Activated CD4-positive, alpha-beta memory T cell treated with anti-CD3 and anti-CD28 coated beads for 36 hours (primary cell): ENCODE measurements at regions of chr2 and their contacts with region 1.

Region 1: GRCh38 chr2:854460-854859 is 96.2 kb upstream of the SNTG2 start:
- DNase-seq: peak; percentile 72
- H3K4me3 Mint-ChIP-seq: no peak overlapping the region
- H3K27ac Mint-ChIP-seq: peak overlapping the region; percentile 43
- H3K4me1 Mint-ChIP-seq: peaks cover 22% of the 10 kb centered on the region
- H3K27me3 Mint-ChIP-seq: no peaks in the 10 kb centered on the region

Region 2: DNA sequence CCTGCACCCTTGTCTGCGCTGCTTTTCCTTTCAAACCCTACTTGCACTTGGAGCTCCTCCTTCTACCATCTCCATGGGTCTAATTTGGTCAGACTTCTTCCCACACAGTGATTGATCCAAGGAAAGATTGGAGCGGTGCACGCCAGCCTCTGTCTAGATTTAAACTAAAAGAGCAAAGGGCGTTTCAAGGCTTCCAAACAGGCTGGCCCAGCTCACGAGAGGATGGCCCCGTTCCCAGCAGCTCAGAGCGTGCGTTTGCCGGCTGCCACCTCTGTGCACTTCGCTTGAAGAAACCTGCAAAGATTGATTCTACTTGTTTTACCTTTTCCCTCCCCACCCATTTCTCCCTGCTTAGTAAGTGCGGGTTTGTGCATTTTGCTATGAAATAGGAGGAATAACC is 487.8 kb before region 1 on chr2:
- CTCF ChIA-PET with region 1: no interaction called
- POLR2A ChIA-PET with region 1: no interaction called
- intact Hi-C with region 1: no loop called
- DNase-seq: no peak
- H3K4me3 Mint-ChIP-seq: no peak overlapping the region
- H3K27ac Mint-ChIP-seq: no peak overlapping the region
- H3K4me1 Mint-ChIP-seq: no peaks in the 10 kb centered on the region
- H3K27me3 Mint-ChIP-seq: peaks cover 17% of the 10 kb centered on the region

Region 3: DNA sequence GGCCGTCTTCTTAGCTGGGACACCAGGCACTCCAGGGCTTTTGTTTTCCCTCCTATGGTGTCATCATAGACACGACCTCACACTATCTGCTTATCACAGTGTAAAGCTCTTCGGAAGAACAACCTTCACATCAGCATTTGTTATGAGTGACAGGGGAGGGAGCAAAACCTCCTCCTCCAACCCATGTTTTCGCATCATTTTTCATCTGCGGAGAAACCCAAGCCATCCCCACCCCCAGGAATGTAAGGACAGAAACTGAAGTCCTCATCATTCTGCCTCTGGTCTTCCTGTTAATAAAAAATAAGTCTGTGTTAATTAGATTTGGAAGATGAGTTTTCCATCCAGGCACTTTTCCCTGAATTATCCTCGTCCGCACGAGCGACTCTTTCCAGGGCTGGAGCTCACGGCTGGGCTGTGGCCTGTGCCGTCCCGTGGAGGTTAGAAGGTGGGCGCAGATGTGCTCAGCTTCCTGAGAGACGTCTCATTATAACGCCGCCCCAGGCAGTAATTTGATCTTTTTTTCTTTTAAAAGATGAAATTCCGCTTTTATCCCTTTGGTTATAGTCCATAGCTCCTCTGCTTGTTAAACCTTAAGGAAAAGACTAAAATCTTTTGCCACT is 75.6 kb before region 1 on chr2:
- CTCF ChIA-PET with region 1: no interaction called
- POLR2A ChIA-PET with region 1: no interaction called
- intact Hi-C with region 1: no loop called
- DNase-seq: no peak
- H3K4me3 Mint-ChIP-seq: no peak overlapping the region
- H3K27ac Mint-ChIP-seq: no peak overlapping the region
- H3K4me1 Mint-ChIP-seq: no peaks in the 10 kb centered on the region
- H3K27me3 Mint-ChIP-seq: peaks cover 13% of the 10 kb centered on the region

Region 4: GRCh38 chr2:866009-866680 is 11.7 kb after region 1 on chr2:
- CTCF ChIA-PET with region 1: no interaction called
- POLR2A ChIA-PET with region 1: no interaction called
- intact Hi-C with region 1: no loop called
- DNase-seq: no peak
- H3K4me3 Mint-ChIP-seq: no peak overlapping the region
- H3K27ac Mint-ChIP-seq: no peak overlapping the region
- H3K4me1 Mint-ChIP-seq: peaks cover 3% of the 10 kb centered on the region
- H3K27me3 Mint-ChIP-seq: peaks cover 10% of the 10 kb centered on the region

Region 5: DNA sequence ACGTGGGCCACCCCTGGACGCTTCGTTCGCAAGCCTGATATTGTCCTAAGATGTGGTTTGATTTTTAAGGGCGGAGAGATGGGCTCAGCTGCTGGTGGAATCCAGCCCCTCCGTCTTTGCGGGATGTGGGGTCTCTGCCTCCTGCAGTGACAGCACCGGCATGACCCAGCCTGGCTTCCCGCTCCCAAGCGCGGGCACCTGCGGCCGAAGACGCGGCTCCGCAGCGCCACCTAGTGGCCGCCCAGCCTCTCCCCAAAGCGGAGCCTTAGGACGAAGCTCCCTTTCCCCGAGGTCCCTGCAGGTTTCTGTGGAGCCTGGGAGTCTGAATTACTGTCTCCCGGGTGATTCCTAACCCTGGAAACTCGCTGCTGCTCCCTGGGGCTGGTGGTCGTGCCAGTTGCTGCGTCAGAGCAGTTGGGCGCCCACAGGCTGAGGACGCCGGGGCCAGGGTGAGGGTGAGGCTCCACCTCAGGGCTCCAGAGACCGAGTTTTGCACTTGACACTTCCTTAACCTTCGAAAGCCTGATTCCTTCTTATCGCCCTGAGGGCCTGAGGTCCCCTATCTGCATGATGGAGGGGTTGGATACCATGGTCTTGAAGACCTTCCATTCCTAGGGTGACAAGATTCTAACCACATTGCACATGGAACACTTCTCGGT is 696.3 kb after region 1 on chr2:
- CTCF ChIA-PET with region 1: interaction called, 12 read pairs
- POLR2A ChIA-PET with region 1: no interaction called
- intact Hi-C with region 1: loop called (anchors 1 kb)
- DNase-seq: peak; percentile 65
- H3K4me3 Mint-ChIP-seq: no peak overlapping the region
- H3K27ac Mint-ChIP-seq: no peak overlapping the region
- H3K4me1 Mint-ChIP-seq: peaks cover 4% of the 10 kb centered on the region
- H3K27me3 Mint-ChIP-seq: peaks cover 1% of the 10 kb centered on the region